B cell (primary cell): ENCODE measurements at regions of chr12 and their contacts with region 1.

Region 1: GRCh38 chr12:4203772-4204376 is 69.7 kb upstream of the CCND2 start:
- DNase-seq: peak; percentile 50
- ATAC-seq: no peak
- H3K4me3 ChIP-seq: no peak overlapping the region
- H3K4me3 Mint-ChIP-seq: peak overlapping the region; percentile 50
- H3K27ac ChIP-seq: no peak overlapping the region
- H3K27ac Mint-ChIP-seq: peak overlapping the region; percentile 53
- H3K4me1 ChIP-seq: peaks cover 52 to 54% of the 10 kb centered on the region in 2 donors
- H3K4me1 Mint-ChIP-seq: peaks cover 58% of the 10 kb centered on the region
- H3K27me3 ChIP-seq: no peaks in the 10 kb centered on the region
- H3K27me3 Mint-ChIP-seq: no peaks in the 10 kb centered on the region
- CTCF ChIP-seq: no peak

Region 2: GRCh38 chr12:4164559-4165558 is 39.0 kb before region 1 on chr12:
- CTCF ChIA-PET with region 1: interaction called, 3 read pairs
- POLR2A ChIA-PET with region 1: interaction called, 9 read pairs
- intact Hi-C with region 1: loop called (anchors 5 kb)
- DNase-seq: peak; percentile 80
- ATAC-seq: peak; percentile 77
- H3K4me3 ChIP-seq: peak overlapping the region; percentile 4 to 75 (median 65)
- H3K4me3 Mint-ChIP-seq: peak overlapping the region; percentile 88
- H3K27ac ChIP-seq: peak overlapping the region; percentile 77 to 95
- H3K27ac Mint-ChIP-seq: peak overlapping the region; percentile 90
- H3K4me1 ChIP-seq: peaks cover 34 to 35% of the 10 kb centered on the region in 2 donors
- H3K4me1 Mint-ChIP-seq: peaks cover 40% of the 10 kb centered on the region
- H3K27me3 ChIP-seq: no peaks in the 10 kb centered on the region
- H3K27me3 Mint-ChIP-seq: no peaks in the 10 kb centered on the region
- CTCF ChIP-seq: no peak

Region 3: DNA sequence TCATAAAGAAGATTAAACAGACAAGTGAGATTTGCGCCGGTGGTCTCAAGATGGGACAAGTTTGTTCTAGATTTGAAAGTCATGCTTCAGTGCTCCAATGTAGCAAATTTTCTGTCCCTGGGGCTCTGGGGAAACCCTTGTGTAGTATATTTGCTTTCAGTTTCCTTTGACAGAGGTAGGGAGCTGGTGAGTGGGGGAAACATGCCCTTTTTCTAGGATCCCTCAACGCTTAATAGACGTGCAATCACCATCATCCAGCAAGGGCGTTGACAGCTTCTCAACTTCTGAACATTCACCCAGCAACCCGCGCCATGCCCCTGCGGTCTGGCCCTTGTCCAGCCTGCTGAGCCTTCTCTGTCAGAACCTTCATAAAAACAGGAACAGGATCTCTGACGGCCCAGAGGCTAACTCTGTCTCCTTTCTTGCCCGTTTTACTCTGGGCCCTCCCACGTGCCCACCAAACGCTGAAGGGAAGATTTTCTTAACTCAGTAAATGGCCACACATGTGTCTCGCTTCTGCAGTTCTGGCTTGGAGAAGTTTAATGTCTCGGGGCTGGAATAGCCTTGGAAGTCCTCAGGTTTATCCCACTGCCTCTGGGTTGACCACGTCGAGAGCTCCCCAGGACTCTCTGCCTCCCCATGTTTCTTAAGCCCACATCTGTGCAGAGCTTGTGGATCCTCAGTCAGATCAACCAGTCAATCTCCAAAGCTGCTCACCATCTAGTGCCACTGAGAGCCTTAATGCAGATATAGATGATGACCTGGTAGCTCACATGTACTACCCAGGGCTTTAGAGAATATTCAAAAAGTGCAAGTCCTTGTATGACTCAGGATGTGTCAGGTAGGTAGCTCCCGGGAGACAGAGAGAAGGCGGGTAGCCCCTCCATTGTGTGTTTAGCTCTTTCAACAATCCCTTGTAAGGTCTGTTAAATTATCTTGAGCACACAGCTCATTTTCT is 11.6 kb after region 1 on chr12:
- CTCF ChIA-PET with region 1: interaction called, 9 read pairs
- POLR2A ChIA-PET with region 1: interaction called, 10 read pairs
- intact Hi-C with region 1: loop called (anchors 1 kb)
- DNase-seq: peak; percentile 91
- ATAC-seq: peak; percentile 90
- H3K4me3 ChIP-seq: peak overlapping the region; percentile 28 to 53 (median 34)
- H3K4me3 Mint-ChIP-seq: peak overlapping the region; percentile 87
- H3K27ac ChIP-seq: peak overlapping the region; percentile 89 to 94
- H3K27ac Mint-ChIP-seq: peak overlapping the region; percentile 94
- H3K4me1 ChIP-seq: peaks cover 32 to 41% of the 10 kb centered on the region in 2 donors
- H3K4me1 Mint-ChIP-seq: peaks cover 41% of the 10 kb centered on the region
- H3K27me3 ChIP-seq: no peaks in the 10 kb centered on the region
- H3K27me3 Mint-ChIP-seq: no peaks in the 10 kb centered on the region
- CTCF ChIP-seq: no peak